ENCODE measurements at regions of chr5 and their contacts with region 1.

Region 1: GRCh38 chr5:62448528-62448927 is 36.0 kb downstream of the IPO11 start:
- DNase-seq: no peak
- H3K4me3 Mint-ChIP-seq: no peak overlapping the region
- H3K27ac Mint-ChIP-seq: no peak overlapping the region
- H3K4me1 Mint-ChIP-seq: no peaks in the 10 kb centered on the region
- H3K27me3 Mint-ChIP-seq: no peaks in the 10 kb centered on the region

Region 2: DNA sequence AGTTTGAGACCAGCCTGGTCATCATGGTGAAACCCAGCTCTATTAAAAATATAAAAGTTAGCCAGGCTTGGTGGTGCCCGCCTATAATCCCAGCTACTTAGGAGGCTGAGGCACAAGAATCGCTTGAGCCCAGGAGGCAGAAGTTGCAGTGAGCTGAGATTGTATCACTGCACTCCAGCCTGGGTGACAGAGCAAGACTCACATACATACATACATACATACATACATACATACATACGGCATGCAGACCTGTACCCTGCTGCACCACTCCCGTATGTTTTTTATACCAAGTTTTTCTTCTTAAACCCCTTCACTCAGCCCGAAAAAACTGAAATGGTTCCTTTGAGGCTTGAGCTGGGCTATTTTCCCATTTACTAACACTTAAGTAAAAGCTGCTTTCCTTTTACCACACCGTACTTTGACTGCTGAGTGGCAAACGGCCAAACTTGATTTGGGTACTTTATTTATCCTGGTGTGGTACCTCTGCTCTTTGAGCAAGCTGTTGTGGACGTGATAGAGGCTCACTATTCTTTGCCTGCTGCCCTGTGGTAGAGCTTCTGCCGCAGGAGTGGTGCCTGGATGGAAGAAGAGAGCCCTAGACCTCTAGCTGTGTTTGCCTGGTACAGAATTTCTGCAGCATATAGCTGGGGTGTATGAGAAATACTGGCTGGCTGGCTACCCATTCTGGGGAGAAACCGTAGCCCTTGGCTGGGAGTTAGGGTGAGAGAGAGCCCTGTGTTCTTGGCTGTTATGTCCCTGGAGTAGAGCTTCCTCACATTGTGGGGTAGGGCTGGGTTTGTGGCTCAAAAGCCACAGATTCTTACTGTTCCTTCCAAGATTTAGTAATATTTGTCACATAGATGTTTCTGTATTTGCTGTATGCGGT is 16.6 kb before region 1 on chr5:
- CTCF ChIA-PET with region 1: interaction called, 17 read pairs
- DNase-seq: no peak
- H3K4me3 Mint-ChIP-seq: no peak overlapping the region
- H3K27ac Mint-ChIP-seq: no peak overlapping the region
- H3K4me1 Mint-ChIP-seq: peaks cover 2% of the 10 kb centered on the region
- H3K27me3 Mint-ChIP-seq: no peaks in the 10 kb centered on the region

Region 3: GRCh38 chr5:62720031-62720441 is 271.5 kb after region 1 on chr5:
- CTCF ChIA-PET with region 1: no interaction called
- DNase-seq: peak; percentile 23
- H3K4me3 Mint-ChIP-seq: no peak overlapping the region
- H3K27ac Mint-ChIP-seq: no peak overlapping the region
- H3K4me1 Mint-ChIP-seq: no peaks in the 10 kb centered on the region
- H3K27me3 Mint-ChIP-seq: peaks cover 14% of the 10 kb centered on the region

Measured in activated naive CD4-positive, alpha-beta T cell treated with anti-CD3 and anti-CD28 coated beads, Interleukin-2, amount 10 ng/mL, durations not matched to agents 7 days and 5 days (primary cell).